ENCODE measurements at regions of chr17 and their contacts with region 1.

Region 1: DNA sequence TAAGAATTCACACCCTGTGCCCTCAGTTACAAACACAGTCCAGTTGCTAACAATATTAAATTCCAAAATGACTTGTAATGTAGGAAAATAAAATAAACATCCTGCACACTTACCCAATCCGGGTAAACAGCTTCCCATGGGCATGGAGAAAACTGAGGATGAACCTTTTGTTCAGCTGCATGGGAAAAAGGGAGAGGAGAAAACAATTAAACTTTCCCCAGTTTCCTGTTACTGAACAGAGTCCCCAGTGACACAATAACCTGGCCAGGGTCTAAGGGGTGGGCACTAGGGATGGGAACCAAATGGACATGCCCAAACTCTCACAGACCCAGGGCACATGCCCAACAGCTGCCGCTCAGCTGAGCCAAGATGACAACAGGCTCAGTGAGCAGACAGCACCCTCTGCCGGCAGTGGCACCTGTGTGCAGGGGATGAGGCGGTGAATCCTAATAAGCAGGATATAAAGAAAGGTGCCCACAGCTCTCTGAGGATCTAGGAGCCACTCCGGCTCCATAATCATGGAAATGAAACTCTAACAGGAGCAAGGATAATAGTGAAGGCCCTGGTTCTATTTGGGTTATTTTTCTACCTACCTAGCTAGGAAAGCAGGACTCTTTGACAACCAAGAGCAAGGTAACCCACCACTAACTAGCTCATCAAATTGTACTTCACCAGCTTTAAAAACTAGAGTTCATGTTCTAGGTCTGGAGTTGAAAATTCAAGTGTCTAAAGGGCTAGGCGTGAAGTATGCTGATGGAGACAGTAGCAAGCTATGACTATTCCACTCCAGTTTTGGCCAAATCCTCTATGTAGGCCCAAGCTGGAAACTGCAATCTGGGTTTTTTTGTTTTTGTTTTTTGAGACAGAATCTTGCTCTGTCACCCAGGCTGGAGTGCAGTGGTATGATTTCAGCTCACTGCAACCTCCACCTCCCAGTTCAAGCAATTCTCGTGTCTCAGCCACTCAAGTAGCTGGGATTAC is 58.8 kb downstream of the SMG6 start:
- DNase-seq: peak; percentile 87
- H3K4me3 ChIP-seq: no peak overlapping the region; a peak in 1 of 4 replicates
- H3K27ac ChIP-seq: peak overlapping the region; percentile 18 to 67; a peak in 3 of 4 replicates
- H3K4me1 ChIP-seq: peaks cover 7 to 15% of the 10 kb centered on the region in 2 experiments; a peak in 1 of 4 replicates
- H3K27me3 ChIP-seq: no peaks in the 10 kb centered on the region
- CTCF ChIP-seq: peak; percentile 96
- EP300 ChIP-seq: no peak
- RAD21 ChIP-seq: peak; percentile 98

Region 2: GRCh38 chr17:1989135-1989534 is 255.7 kb before region 1 on chr17:
- CTCF ChIA-PET with region 1: no interaction called
- POLR2A ChIA-PET with region 1: no interaction called
- DNase-seq: no peak
- H3K4me3 ChIP-seq: no peak overlapping the region
- H3K27ac ChIP-seq: peak overlapping the region in 1 of 2 experiments; percentile 64; a peak in 2 of 4 replicates
- H3K4me1 ChIP-seq: peaks cover 4 to 5% of the 10 kb centered on the region in 2 experiments; a peak in 2 of 4 replicates
- H3K27me3 ChIP-seq: no peaks in the 10 kb centered on the region
- CTCF ChIP-seq: no peak
- EP300 ChIP-seq: no peak
- RAD21 ChIP-seq: no peak

Region 3: DNA sequence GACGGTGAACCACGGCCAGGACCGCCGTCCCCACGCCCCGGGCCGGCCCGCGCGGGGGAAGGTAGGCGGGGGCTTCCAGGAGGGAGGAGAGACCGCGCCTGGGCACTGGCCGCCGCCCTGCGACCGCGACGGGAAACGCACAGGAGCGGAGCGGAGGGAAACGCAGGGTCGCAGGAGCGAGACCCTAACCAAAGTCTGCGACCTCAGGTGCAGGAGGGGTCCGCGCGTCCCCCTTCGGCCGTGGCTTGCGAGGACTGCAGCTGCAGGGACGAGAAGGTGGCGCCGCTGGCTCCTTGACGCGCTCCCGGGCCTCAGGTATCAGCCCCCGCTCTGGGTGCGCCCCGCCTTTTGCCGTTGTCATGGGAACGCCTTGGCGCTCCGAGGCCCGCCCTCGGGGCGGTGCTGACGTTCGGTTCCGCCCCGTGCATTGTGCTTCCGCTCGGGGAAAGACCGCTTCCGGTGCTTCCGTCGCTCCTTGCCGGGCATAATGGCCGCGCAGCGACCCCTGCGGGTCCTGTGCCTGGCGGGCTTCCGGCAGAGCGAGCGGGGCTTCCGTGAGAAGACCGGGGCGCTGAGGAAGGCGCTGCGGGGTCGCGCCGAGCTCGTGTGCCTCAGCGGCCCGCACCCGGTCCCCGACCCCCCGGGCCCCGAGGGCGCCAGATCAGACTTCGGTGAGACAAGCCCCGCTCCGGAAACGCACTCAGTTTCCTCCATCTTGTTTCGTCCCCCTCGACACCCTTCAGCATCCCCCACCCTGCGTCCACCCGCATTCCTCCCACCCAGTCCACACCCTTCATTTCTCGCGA is 203.1 kb before region 1 on chr17 and contains the start of gene OVCA2:
- CTCF ChIA-PET with region 1: interaction called, 29 read pairs
- POLR2A ChIA-PET with region 1: interaction called, 3 read pairs
- DNase-seq: peak; percentile 97
- H3K4me3 ChIP-seq: peak within 1 kb of the TSS; percentile 71 to 81
- H3K27ac ChIP-seq: peak within 1 kb of the TSS; percentile 79 to 92
- H3K4me1 ChIP-seq: peaks cover 20 to 21% of the 10 kb centered on the region in 2 experiments; a peak in 3 of 4 replicates
- H3K27me3 ChIP-seq: no peaks in the 10 kb centered on the region
- CTCF ChIP-seq: peak; percentile 26; the same call in 1 of the 2 replicates
- EP300 ChIP-seq: no peak
- RAD21 ChIP-seq: peak; percentile 49
- polyA plus RNA-seq, gene OVCA2: 58.1 and 59.2 TPM in 2 replicates

Region 4: DNA sequence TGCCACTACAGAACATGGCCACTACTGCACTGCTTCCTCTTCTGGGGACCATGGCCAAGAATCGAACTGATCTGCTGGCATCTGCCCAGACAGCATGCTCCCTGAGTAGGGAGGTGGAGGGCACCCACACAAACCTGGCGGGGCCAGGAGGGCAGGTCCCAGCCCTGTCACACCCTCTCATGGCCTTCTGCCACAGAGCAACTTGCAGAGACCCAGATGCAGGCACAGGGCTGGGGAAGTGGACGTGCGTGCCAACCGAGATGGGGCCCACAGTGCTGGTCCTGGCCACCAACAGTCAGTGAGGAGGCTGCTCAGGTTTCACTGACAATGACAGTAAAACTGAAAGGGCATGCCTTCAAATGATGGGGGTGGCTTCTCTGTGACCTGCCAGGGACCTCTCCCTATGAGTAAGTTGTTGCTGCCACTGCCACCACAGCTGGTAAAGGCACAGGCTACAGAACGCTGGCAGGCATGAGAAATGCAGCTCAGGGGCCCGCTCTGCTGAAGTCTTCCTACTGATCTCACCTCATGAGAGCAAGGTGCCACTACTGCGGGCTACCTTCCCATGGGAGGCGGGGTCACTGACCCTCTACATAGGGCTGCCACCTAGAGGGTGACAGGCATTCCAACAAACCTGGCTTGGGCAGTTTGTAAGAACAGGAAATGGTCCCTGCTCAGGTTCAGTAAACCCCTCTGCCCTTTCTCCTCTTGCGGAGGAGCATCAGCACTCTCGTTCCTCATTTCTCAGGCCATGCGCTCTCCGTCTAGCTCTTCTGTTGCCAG is 174.4 kb before region 1 on chr17:
- CTCF ChIA-PET with region 1: interaction called, 29 read pairs
- POLR2A ChIA-PET with region 1: no interaction called
- DNase-seq: no peak
- H3K4me3 ChIP-seq: no peak overlapping the region
- H3K27ac ChIP-seq: peak overlapping the region in 1 of 2 experiments; percentile 8; a peak in 1 of 4 replicates
- H3K4me1 ChIP-seq: peaks cover 27 to 49% of the 10 kb centered on the region in 2 experiments; a peak in 3 of 4 replicates
- H3K27me3 ChIP-seq: no peaks in the 10 kb centered on the region
- CTCF ChIP-seq: no peak
- EP300 ChIP-seq: no peak
- RAD21 ChIP-seq: no peak

Region 5: DNA sequence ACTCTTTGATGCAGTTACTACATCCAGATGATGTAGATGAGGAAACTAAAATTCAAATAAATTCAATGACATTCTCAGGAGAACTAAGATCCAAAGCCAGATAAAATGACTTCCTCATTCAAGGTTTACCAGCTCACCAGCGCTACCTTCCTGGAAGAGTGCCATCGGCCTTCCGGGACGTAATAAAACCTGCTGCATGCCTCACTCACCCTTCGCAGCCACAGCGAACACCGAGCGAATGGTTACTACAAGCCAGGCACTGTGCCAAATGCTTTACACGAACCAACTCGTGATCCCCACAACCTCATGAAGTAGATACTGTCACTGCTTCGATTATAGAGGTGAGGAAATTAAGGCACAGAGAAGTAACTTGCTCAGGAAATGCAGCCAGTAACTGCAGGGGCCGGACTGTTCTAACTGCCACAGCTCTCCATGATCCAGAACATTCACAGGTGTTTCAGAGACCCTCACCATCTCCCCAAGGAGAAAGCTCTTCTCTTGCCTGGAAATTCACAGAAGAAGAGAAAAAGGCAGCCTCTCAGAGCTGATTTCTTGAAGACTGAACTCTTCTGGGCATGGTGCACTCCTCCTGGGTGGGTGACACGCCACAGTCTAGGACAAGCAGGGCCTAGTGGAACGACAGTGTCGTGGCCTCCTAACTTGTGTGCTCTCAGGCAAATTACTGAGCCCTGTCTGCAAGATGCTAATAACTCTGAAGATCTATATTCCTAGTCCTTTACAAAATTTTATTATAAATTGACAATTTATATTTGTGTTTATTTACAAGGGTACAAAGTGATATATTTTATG is 143.2 kb before region 1 on chr17:
- CTCF ChIA-PET with region 1: interaction called, 35 read pairs
- POLR2A ChIA-PET with region 1: no interaction called
- DNase-seq: no peak
- H3K4me3 ChIP-seq: no peak overlapping the region
- H3K27ac ChIP-seq: 0 out of 4 replicates have a peak overlapping the region, but pooled peaks of 1 of the 2 experiments have one; percentile 6
- H3K4me1 ChIP-seq: peaks cover 5 to 11% of the 10 kb centered on the region in 2 experiments; a peak in 1 of 4 replicates
- H3K27me3 ChIP-seq: no peaks in the 10 kb centered on the region
- CTCF ChIP-seq: no peak
- EP300 ChIP-seq: no peak
- RAD21 ChIP-seq: no peak

Region 6: GRCh38 chr17:2215616-2216364 is 29.0 kb before region 1 on chr17:
- CTCF ChIA-PET with region 1: interaction called, 14 read pairs
- POLR2A ChIA-PET with region 1: no interaction called
- DNase-seq: peak; percentile 79
- H3K4me3 ChIP-seq: peak overlapping the region; percentile 33 to 48
- H3K27ac ChIP-seq: peak overlapping the region; percentile 97 to 99
- H3K4me1 ChIP-seq: peaks cover 38 to 41% of the 10 kb centered on the region in 2 experiments
- H3K27me3 ChIP-seq: no peaks in the 10 kb centered on the region
- CTCF ChIP-seq: no peak
- EP300 ChIP-seq: peak in 1 of 2 experiments; percentile 73; a peak in 3 of 4 replicates
- RAD21 ChIP-seq: no peak

Region 7: GRCh38 chr17:2282297-2282873 is 37.5 kb after region 1 on chr17:
- CTCF ChIA-PET with region 1: interaction called, 27 read pairs
- POLR2A ChIA-PET with region 1: no interaction called
- DNase-seq: peak; percentile 61
- H3K4me3 ChIP-seq: no peak overlapping the region
- H3K27ac ChIP-seq: peak overlapping the region in 1 of 2 experiments; percentile 26; a peak in 2 of 4 replicates
- H3K4me1 ChIP-seq: no peaks in the 10 kb centered on the region; a peak in 1 of 4 replicates
- H3K27me3 ChIP-seq: no peaks in the 10 kb centered on the region
- CTCF ChIP-seq: peak; percentile 74
- EP300 ChIP-seq: no peak
- RAD21 ChIP-seq: peak; percentile 70

Measured in SK-N-SH (cell line).